CD8-positive, alpha-beta T cell (primary cell): ENCODE measurements at regions of chr11 and their contacts with region 1.

Region 1: DNA sequence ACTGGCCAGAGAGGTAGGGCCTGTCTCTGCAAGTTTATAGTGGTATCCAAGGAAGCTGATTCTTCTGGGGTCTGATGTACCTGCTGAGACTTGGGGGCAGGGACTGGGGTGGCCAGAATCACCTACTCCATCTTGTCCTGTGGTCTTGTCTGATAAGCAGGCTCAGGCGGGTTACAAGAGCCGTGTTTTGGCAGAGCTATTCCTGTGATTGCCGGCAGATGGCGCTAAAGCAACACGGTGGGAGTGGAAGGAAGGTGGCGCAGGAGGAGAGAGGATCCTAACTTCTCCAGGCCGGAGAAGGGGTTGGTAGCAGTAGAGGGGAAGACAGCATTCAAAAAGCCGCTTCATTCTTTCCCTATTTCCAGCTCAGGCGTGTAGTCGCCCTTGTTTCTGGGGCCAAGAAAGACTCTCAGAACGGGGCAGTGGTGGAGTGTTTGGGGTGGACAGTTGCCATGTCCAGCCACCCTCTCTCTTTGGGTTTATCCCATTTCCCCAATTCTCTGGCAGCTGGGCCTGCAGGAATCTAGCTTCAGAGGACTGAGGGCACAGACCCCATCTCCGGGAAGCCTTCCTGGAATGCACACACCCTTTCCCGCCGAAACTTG is 15.1 kb downstream of the CHRM1 start:
- DNase-seq: peak; percentile 61 to 88 (median 81)
- ATAC-seq: peak; percentile 77
- H3K4me3 ChIP-seq: no peak overlapping the region
- H3K4me3 Mint-ChIP-seq: no peak overlapping the region
- H3K27ac ChIP-seq: no peak overlapping the region
- H3K27ac Mint-ChIP-seq: no peak overlapping the region
- H3K4me1 ChIP-seq: no peaks in the 10 kb centered on the region
- H3K4me1 Mint-ChIP-seq: peaks cover 1% of the 10 kb centered on the region
- H3K27me3 ChIP-seq: no peaks in the 10 kb centered on the region
- H3K27me3 Mint-ChIP-seq: peaks cover 7% of the 10 kb centered on the region
- CTCF ChIP-seq: peak; percentile 96

Region 2: GRCh38 chr11:62889484-62890437 is 16.3 kb before region 1 on chr11:
- CTCF ChIA-PET with region 1: interaction called, 10 read pairs
- POLR2A ChIA-PET with region 1: no interaction called
- intact Hi-C with region 1: no loop called
- DNase-seq: no peak
- ATAC-seq: no peak
- H3K4me3 ChIP-seq: no peak overlapping the region
- H3K4me3 Mint-ChIP-seq: no peak overlapping the region
- H3K27ac ChIP-seq: no peak overlapping the region
- H3K27ac Mint-ChIP-seq: no peak overlapping the region
- H3K4me1 ChIP-seq: no peaks in the 10 kb centered on the region
- H3K4me1 Mint-ChIP-seq: peaks cover 11% of the 10 kb centered on the region
- H3K27me3 ChIP-seq: no peaks in the 10 kb centered on the region
- H3K27me3 Mint-ChIP-seq: no peaks in the 10 kb centered on the region
- CTCF ChIP-seq: no peak

Region 3: DNA sequence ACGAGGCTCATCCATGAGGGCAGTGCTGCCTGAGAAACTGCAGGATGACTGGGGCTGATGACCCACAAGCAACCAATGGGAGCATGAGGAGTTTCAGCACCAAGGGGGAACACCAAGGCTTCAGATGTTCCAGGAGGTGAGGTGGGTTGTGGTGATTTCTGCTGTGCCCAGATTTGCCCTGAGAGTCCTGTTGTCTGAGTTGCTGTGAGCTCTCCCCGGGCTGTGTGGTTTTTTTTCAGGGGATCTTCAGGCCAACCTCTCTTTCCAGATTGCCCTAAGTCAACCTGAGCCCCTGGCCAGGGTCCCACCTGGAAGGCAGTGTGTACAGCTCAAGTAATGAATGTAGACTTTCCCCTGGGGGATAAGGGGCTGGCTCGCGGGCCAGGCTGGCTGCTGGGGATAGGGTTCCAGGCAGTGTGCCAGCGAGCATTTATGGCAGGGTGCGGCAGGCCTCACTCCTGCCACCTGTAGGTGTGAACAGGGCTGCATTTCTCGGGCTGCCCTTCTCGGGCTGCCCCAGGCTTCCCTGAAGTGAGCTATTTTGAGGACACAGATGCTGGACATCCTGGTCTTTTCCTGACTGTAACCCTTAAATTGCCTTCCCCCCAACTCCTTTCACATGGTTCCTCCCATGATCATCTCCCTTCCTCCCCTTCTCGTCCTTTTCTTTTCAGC is 69.0 kb after region 1 on chr11:
- CTCF ChIA-PET with region 1: interaction called, 11 read pairs
- POLR2A ChIA-PET with region 1: no interaction called
- intact Hi-C with region 1: loop called (anchors 1 kb)
- DNase-seq: peak in 3 of 9 experiments; percentile 8 to 31 (median 16)
- ATAC-seq: no peak
- H3K4me3 ChIP-seq: no peak overlapping the region
- H3K4me3 Mint-ChIP-seq: no peak overlapping the region
- H3K27ac ChIP-seq: no peak overlapping the region
- H3K27ac Mint-ChIP-seq: no peak overlapping the region
- H3K4me1 ChIP-seq: no peaks in the 10 kb centered on the region
- H3K4me1 Mint-ChIP-seq: no peaks in the 10 kb centered on the region
- H3K27me3 ChIP-seq: no peaks in the 10 kb centered on the region
- H3K27me3 Mint-ChIP-seq: peaks cover 31% of the 10 kb centered on the region
- CTCF ChIP-seq: no peak

Region 4: DNA sequence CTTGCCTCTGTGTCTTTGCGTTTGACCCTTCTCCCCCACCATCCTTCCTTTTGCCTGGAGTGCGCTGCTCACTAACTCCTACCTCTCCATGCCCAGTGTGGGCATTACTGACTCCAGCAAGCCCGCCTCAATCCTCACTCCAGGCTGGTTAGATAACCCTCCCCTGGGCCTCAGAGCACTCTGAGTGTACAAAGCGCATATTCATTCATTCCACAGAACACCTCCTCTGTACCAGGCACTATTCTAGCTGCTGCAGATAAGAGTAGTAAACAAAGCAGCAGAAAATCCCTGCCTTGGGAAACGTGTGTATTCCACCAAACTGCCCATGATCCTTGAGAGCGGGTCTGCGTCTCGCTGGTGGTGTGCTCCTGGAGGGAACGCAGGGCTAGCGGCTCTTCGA is 106.4 kb after region 1 on chr11:
- CTCF ChIA-PET with region 1: interaction called, 282 read pairs
- POLR2A ChIA-PET with region 1: no interaction called
- intact Hi-C with region 1: no loop called
- DNase-seq: no peak
- ATAC-seq: no peak
- H3K4me3 ChIP-seq: no peak overlapping the region
- H3K4me3 Mint-ChIP-seq: no peak overlapping the region
- H3K27ac ChIP-seq: no peak overlapping the region
- H3K27ac Mint-ChIP-seq: no peak overlapping the region
- H3K4me1 ChIP-seq: no peaks in the 10 kb centered on the region
- H3K4me1 Mint-ChIP-seq: no peaks in the 10 kb centered on the region
- H3K27me3 ChIP-seq: no peaks in the 10 kb centered on the region
- H3K27me3 Mint-ChIP-seq: peaks cover 15% of the 10 kb centered on the region
- CTCF ChIP-seq: no peak

Region 5: GRCh38 chr11:63212742-63213141 is 306.7 kb after region 1 on chr11:
- CTCF ChIA-PET with region 1: interaction called, 13 read pairs
- POLR2A ChIA-PET with region 1: no interaction called
- intact Hi-C with region 1: no loop called
- DNase-seq: peak in 2 of 9 experiments; percentile 29 to 44
- ATAC-seq: no peak
- H3K4me3 ChIP-seq: no peak overlapping the region
- H3K4me3 Mint-ChIP-seq: no peak overlapping the region
- H3K27ac ChIP-seq: no peak overlapping the region
- H3K27ac Mint-ChIP-seq: no peak overlapping the region
- H3K4me1 ChIP-seq: no peaks in the 10 kb centered on the region
- H3K4me1 Mint-ChIP-seq: no peaks in the 10 kb centered on the region
- H3K27me3 ChIP-seq: no peaks in the 10 kb centered on the region
- H3K27me3 Mint-ChIP-seq: peaks cover 43% of the 10 kb centered on the region
- CTCF ChIP-seq: peak; percentile 56